Transverse colon (tissue), 4 donors: ENCODE measurements at regions of chr6 and their contacts with region 1.

Region 1: DNA sequence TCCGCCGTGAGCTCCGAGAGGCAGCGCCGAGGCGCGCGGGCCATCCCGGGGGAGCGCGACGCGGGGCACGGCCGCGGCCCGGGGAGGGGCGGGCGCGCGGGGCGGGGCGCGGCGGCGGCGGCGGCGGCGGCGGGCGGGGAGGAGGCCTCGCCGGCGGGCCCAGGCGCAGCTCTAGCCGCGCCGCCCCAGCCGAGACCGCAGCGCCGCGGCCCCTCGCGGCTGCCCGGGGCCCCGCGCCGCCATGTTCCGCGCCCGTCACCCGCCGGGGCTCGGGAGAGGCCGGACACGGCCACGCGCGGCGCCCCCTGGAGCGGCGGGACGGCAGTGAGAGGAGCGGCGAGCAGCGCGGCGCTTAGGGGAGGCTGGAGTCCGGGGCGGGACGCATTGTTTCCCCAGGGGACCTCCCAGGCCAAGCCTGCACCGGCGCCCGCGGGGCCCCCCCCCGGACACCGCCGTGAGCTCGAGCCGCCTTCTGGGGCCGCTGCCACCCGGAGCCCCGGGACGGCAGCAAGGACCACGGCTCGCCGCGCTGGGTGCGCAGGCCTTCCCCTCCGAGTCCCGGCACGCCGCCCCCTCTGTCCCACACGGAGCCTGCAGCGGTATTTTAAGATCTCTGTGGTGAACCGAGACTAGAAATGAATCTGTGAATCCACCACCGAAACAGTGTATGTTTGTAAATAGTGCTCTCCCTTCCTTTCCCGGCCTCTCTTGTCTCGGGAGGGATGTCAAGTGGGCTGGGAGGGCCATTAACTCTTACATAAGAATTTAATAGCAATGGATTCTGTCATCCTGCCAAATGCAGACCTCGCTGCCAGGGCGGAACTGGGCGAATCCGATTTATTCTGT is at the start of gene KIF13A:
- DNase-seq: peak; percentile 65
- H3K4me3 ChIP-seq: peak within 1 kb of the TSS; percentile 79 to 90 (median 88)
- H3K27ac ChIP-seq: peak within 1 kb of the TSS; percentile 96 to 99 (median 98)
- H3K4me1 ChIP-seq: peaks cover 7 to 38% (median 33%) of the 10 kb centered on the region in 4 donors
- H3K27me3 ChIP-seq: no peaks in the 10 kb centered on the region
- CTCF ChIP-seq: peak in 3 of 5 experiments; percentile 18 to 24 (median 18)
- EP300 ChIP-seq: no peak
- POLR2A ChIP-seq: peak; percentile 29
- total RNA-seq, gene KIF13A: 36.3 to 47.5 (median 38.1) TPM

Region 2: DNA sequence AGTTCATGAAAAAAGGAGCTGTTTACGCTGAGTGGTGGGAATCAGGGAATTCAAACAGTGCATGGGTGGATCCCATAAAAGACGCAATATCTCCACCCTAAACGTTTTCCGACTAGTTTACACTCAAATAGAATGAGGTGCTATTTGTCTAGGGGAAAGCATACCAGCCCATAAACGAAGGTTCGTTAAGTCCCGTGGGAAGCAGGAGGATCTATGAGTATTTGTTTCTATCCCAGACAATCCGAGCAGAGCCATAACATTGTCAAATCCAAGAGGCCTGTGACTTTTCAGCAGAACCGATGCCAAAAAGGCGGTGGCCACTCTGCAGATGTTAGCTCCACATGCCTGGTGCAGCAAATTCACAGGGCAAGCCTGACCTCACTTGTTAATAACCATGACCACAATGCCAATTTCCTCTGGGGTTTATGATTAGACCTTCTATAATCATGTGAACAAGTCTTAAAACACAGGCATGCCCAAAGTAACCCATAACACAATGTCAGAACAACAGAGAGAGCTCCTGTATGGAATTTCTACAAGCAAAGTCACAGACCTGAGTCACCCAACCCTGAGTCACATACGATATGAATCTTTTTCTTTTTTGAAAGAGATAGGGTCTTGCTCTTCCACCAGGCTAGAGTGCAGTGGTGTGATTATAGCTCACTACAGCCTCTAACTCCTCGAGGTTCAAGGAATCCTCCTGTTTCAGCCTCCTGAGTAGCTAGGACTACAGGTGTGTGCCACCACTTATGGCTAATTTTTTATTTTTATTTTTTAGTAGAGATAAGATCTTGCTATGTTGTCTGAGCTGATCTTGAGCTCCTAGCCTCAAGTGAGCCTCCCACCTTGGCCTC is 123.7 kb before region 1 on chr6:
- in situ Hi-C with region 1: no loop called
- intact Hi-C with region 1: loop called (anchors 5 kb)
- DNase-seq: peak; percentile 42
- H3K4me3 ChIP-seq: no peak overlapping the region
- H3K27ac ChIP-seq: peak overlapping the region; percentile 66 to 78 (median 72)
- H3K4me1 ChIP-seq: peaks cover 24 to 61% (median 31%) of the 10 kb centered on the region in 4 donors
- H3K27me3 ChIP-seq: no peaks in the 10 kb centered on the region
- CTCF ChIP-seq: no peak
- EP300 ChIP-seq: no peak
- POLR2A ChIP-seq: no peak

Region 3: GRCh38 chr6:17932330-17932852 is 55.4 kb before region 1 on chr6:
- in situ Hi-C with region 1: no loop called
- intact Hi-C with region 1: loop called (anchors 10 kb)
- DNase-seq: no peak
- H3K4me3 ChIP-seq: no peak overlapping the region
- H3K27ac ChIP-seq: peak overlapping the region; percentile 44 to 71 (median 52)
- H3K4me1 ChIP-seq: peaks cover 0 to 76% (median 32%) of the 10 kb centered on the region in 4 donors
- H3K27me3 ChIP-seq: no peaks in the 10 kb centered on the region
- CTCF ChIP-seq: no peak
- EP300 ChIP-seq: no peak
- POLR2A ChIP-seq: no peak

Region 4: GRCh38 chr6:19312241-19312978 is 1324.6 kb after region 1 on chr6:
- in situ Hi-C with region 1: no loop called
- intact Hi-C with region 1: no loop called
- DNase-seq: no peak
- H3K4me3 ChIP-seq: no peak overlapping the region
- H3K27ac ChIP-seq: no peak overlapping the region
- H3K4me1 ChIP-seq: no peaks in the 10 kb centered on the region
- H3K27me3 ChIP-seq: no peaks in the 10 kb centered on the region
- CTCF ChIP-seq: no peak
- EP300 ChIP-seq: no peak
- POLR2A ChIP-seq: no peak